ENCODE measurements at regions of chr6 and their contacts with region 1.

Region 1: GRCh38 chr6:90393232-90393884 is 96.7 kb upstream of the BACH2 start:
- DNase-seq: peak; percentile 43 to 87 (median 81)
- ATAC-seq: peak; percentile 81
- H3K4me3 ChIP-seq: no peak overlapping the region
- H3K4me3 Mint-ChIP-seq: peak overlapping the region in 9 of 10 donors; percentile 2 to 59 (median 26)
- H3K27ac ChIP-seq: no peak overlapping the region
- H3K27ac Mint-ChIP-seq: peak overlapping the region; percentile 7 to 77 (median 26)
- H3K4me1 ChIP-seq: peaks cover 18 to 29% of the 10 kb centered on the region in 2 donors
- H3K4me1 Mint-ChIP-seq: peaks cover 15 to 43% (median 38%) of the 10 kb centered on the region in 7 donors
- H3K27me3 ChIP-seq: no peaks in the 10 kb centered on the region
- H3K27me3 Mint-ChIP-seq: peaks cover 0 to 4% (median 0%) of the 10 kb centered on the region in 5 donors

Region 2: GRCh38 chr6:89970609-89971337 is 422.6 kb before region 1 on chr6:
- CTCF ChIA-PET with region 1: no interaction called
- POLR2A ChIA-PET with region 1: no interaction called
- intact Hi-C with region 1: loop called (anchors 1 kb)
- DNase-seq: peak in 7 of 9 donors; percentile 31 to 54 (median 39)
- ATAC-seq: peak; percentile 72
- H3K4me3 ChIP-seq: no peak overlapping the region
- H3K4me3 Mint-ChIP-seq: no peak overlapping the region
- H3K27ac ChIP-seq: no peak overlapping the region
- H3K27ac Mint-ChIP-seq: no peak overlapping the region
- H3K4me1 ChIP-seq: peaks cover 0 to 15% of the 10 kb centered on the region in 2 donors
- H3K4me1 Mint-ChIP-seq: peaks cover 9 to 53% (median 40%) of the 10 kb centered on the region in 7 donors
- H3K27me3 ChIP-seq: no peaks in the 10 kb centered on the region
- H3K27me3 Mint-ChIP-seq: no peaks in the 10 kb centered on the region

Region 3: DNA sequence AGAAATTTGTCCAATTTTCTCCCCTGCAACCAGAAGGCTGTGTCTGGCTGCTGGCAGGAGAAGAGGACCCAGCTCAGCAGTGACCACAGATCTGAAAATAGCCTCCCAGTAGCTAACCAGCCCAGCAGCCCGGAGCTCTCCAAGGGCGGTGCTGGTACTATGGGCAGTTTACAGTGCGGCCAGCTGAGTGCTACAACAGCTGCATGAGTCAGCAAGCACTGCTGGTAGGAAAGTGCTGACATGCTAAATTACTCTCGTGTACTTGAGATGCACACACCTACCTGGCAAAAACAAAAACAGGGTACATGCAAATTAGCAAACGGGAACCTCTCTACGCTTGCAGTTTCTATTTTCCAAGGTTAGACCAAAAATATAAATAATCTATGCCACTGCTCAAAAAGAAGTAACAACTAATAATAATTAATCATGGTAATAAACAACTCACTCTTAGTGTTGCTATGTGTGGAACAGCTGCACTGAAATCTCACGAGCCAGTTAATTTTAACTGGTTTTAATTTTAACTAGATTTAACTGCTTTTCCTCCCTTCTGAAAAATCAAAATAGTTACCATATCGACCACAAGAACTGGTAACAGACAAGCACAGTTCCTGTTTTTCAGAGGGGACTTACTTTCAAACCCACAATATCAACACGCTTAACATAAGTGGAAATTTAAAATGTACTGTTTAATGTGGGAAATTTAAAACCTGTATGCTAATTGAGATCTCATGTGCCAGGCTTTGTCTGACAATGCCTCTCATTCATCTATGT is 107.6 kb before region 1 on chr6:
- CTCF ChIA-PET with region 1: interaction called, 7 read pairs
- POLR2A ChIA-PET with region 1: interaction called, 4 read pairs
- intact Hi-C with region 1: loop called (anchors 1 kb)
- DNase-seq: peak in 8 of 9 donors; percentile 53 to 87 (median 74)
- ATAC-seq: peak; percentile 68
- H3K4me3 ChIP-seq: peak overlapping the region; percentile 51
- H3K4me3 Mint-ChIP-seq: peak overlapping the region; percentile 83 to 94 (median 88)
- H3K27ac ChIP-seq: peak overlapping the region; percentile 81
- H3K27ac Mint-ChIP-seq: peak overlapping the region; percentile 89 to 100 (median 96)
- H3K4me1 ChIP-seq: peaks cover 21 to 72% of the 10 kb centered on the region in 2 donors
- H3K4me1 Mint-ChIP-seq: peaks cover 54 to 96% (median 92%) of the 10 kb centered on the region in 7 donors
- H3K27me3 ChIP-seq: no peaks in the 10 kb centered on the region
- H3K27me3 Mint-ChIP-seq: peaks cover 0 to 2% (median 0%) of the 10 kb centered on the region in 5 donors

Region 4: GRCh38 chr6:90406142-90406794 is 12.9 kb after region 1 on chr6:
- CTCF ChIA-PET with region 1: interaction called, 4 read pairs
- POLR2A ChIA-PET with region 1: interaction called, 8 read pairs
- intact Hi-C with region 1: loop called in 1 of 2 experiments (anchors 1 kb)
- DNase-seq: no peak
- ATAC-seq: no peak
- H3K4me3 ChIP-seq: no peak overlapping the region
- H3K4me3 Mint-ChIP-seq: peak overlapping the region in 1 of 10 donors; percentile 20
- H3K27ac ChIP-seq: no peak overlapping the region
- H3K27ac Mint-ChIP-seq: peak overlapping the region in 3 of 9 donors; percentile 13 to 79 (median 51)
- H3K4me1 ChIP-seq: peaks cover 17 to 43% of the 10 kb centered on the region in 2 donors
- H3K4me1 Mint-ChIP-seq: peaks cover 17 to 65% (median 25%) of the 10 kb centered on the region in 7 donors
- H3K27me3 ChIP-seq: no peaks in the 10 kb centered on the region
- H3K27me3 Mint-ChIP-seq: no peaks in the 10 kb centered on the region

Region 5: GRCh38 chr6:90425161-90425641 is 31.8 kb after region 1 on chr6:
- CTCF ChIA-PET with region 1: interaction called, 6 read pairs
- POLR2A ChIA-PET with region 1: interaction called, 3 read pairs
- intact Hi-C with region 1: loop called (anchors 1 to 5 kb)
- DNase-seq: peak in 6 of 9 donors; percentile 19 to 47 (median 42)
- ATAC-seq: peak; percentile 86
- H3K4me3 ChIP-seq: peak overlapping the region; percentile 32
- H3K4me3 Mint-ChIP-seq: peak overlapping the region; percentile 63 to 85 (median 78)
- H3K27ac ChIP-seq: peak overlapping the region; percentile 53
- H3K27ac Mint-ChIP-seq: peak overlapping the region; percentile 87 to 97 (median 92)
- H3K4me1 ChIP-seq: peaks cover 0 to 10% of the 10 kb centered on the region in 2 donors
- H3K4me1 Mint-ChIP-seq: peaks cover 12 to 25% (median 18%) of the 10 kb centered on the region in 7 donors
- H3K27me3 ChIP-seq: no peaks in the 10 kb centered on the region
- H3K27me3 Mint-ChIP-seq: no peaks in the 10 kb centered on the region

Region 6: DNA sequence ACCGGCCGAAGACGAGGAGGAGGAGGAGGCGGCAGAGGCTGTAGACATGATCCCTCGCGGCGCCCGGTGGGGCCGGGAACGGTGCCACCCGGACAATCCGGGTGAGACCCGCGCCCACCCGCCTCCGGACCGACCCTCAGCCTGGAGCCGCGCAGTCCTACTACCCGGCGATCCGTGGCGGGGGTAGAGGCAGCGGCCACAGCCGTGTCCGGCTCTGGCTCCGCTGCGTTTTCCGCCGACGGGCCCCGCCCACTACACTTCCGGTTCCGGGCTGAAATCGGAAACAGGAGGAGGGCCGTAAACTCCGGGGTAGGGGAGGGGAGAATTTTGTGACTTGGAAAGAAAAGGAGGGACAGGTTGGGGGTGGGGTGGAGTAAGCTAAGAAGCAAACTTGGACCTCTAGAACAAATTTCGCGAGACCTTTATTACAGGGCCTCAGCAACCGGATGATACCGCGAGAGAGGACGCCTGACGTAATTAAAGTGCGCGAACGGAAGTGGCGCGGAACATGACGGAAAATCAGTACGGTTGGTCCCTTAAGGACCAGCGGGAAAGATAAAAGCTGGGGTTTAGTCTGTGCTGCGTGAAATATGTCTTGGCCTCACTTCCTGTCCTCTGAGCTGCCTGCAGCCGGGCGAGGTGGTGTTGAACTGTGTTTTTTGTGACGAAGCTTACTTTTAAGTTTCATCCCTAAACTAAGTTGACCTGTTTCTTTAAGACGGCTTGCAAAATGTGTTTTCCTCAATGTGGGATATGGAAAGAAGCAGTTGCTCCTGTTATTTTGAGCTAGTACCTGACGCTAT is 193.7 kb after region 1 on chr6 and contains the start of gene MAP3K7:
- CTCF ChIA-PET with region 1: no interaction called
- POLR2A ChIA-PET with region 1: no interaction called
- intact Hi-C with region 1: loop called in 1 of 2 experiments (anchors 10 kb)
- DNase-seq: peak; percentile 83 to 96 (median 93)
- ATAC-seq: peak; percentile 90
- H3K4me3 ChIP-seq: peak within 1 kb of the TSS; percentile 88
- H3K4me3 Mint-ChIP-seq: peak within 1 kb of the TSS; percentile 92 to 99 (median 96)
- H3K27ac ChIP-seq: peak within 1 kb of the TSS; percentile 93
- H3K27ac Mint-ChIP-seq: peak within 1 kb of the TSS; percentile 93 to 100 (median 99)
- H3K4me1 ChIP-seq: peaks cover 17 to 22% of the 10 kb centered on the region in 2 donors
- H3K4me1 Mint-ChIP-seq: peaks cover 24 to 49% (median 45%) of the 10 kb centered on the region in 7 donors
- H3K27me3 ChIP-seq: no peaks in the 10 kb centered on the region
- H3K27me3 Mint-ChIP-seq: peaks cover 5 to 36% (median 11%) of the 10 kb centered on the region in 5 donors
- total RNA-seq, gene MAP3K7: 16.1 to 38.5 (median 29.9) TPM

Measured in naive thymus-derived CD4-positive, alpha-beta T cell (primary cell).